Mammary epithelial cell (primary cell): ENCODE measurements at regions of chr12 and their contacts with region 1.

Region 1: DNA sequence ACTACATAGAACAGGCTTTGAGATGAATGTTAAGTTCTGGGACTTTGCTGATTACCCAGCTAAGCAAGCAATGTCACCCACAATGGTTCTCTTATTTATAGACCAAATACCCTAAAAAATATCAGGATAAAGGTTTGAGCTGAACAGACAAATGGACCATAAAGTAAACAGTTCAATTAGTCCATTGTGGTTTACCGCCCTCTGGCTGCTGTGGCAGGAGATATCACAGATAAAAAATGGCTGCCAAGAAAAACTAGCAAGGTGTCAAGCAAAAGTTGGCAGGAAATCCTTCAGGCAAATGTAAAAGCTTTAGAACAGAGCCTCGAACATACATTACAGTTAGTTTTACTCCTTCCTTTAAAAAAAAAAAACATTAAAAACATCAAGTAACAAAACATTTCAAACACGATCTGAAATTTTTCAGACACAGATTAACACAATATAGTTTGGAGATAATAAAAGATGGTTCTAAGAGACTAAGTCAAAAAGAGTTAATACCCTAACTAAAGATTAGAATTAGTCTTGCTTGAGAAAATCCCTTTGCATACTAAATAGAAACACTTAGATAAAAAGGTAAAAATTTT is 41.3 kb downstream of the MED13L start:
- DNase-seq: peak; percentile 40
- H3K4me3 ChIP-seq: no peak overlapping the region
- H3K27ac ChIP-seq: no peak overlapping the region
- H3K4me1 ChIP-seq: peaks cover 6% of the 10 kb centered on the region
- H3K27me3 ChIP-seq: no peaks in the 10 kb centered on the region
- CTCF ChIP-seq: peak; percentile 56 to 82

Region 2: DNA sequence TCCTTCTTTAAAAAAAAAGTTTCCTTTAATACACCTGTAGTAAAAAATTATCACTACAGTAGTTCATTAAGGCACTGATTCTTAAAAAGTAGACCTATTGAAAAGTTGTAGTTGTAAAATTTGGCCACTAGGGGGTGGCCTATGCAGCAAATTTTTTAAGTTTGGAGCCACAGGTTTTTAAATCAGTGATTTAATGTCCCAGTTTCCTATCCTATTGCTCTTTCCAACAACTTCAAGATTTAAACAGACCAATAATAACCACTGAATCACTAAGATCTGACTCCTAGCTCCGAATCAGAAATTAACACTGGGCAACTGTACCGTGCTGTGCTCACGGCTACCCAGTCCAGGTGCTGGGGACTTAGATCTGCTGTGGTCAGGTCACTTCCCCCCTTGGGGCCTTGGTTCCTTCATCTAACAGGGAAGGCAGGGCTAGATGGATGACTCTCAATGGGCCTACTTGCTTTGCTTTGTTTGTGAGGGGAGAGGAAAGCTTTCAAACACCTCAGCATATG is 238.1 kb before region 1 on chr12:
- CTCF ChIA-PET with region 1: no interaction called
- dilution Hi-C with region 1: no loop called
- in situ Hi-C with region 1: no loop called
- intact Hi-C with region 1: loop called (anchors 5 kb)
- DNase-seq: peak; percentile 12
- H3K4me3 ChIP-seq: no peak overlapping the region
- H3K27ac ChIP-seq: no peak overlapping the region
- H3K4me1 ChIP-seq: no peaks in the 10 kb centered on the region
- H3K27me3 ChIP-seq: no peaks in the 10 kb centered on the region
- CTCF ChIP-seq: peak; percentile 60 to 70

Region 3: DNA sequence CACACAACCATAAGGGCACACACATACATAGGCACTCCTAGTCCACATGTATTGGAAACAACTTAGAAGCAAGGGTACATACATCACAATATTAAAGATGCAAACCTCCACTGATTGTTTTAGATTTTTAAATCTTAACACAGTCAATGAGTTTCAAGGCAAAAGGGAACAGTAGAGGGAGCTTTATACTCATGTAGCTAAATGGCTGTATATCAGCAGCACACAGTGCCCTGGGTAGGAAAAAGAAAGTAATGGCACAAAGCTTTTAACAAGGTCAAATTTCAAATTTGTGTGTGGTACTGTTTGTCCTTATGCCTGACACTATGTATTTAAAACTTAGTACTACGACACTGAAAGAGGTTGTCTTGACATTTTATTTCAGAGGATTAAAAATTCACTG is 220.7 kb before region 1 on chr12:
- CTCF ChIA-PET with region 1: interaction called, 4 read pairs
- dilution Hi-C with region 1: no loop called
- in situ Hi-C with region 1: no loop called
- intact Hi-C with region 1: loop called (anchors 1 kb)
- DNase-seq: peak; percentile 31
- H3K4me3 ChIP-seq: no peak overlapping the region
- H3K27ac ChIP-seq: no peak overlapping the region
- H3K4me1 ChIP-seq: no peaks in the 10 kb centered on the region
- H3K27me3 ChIP-seq: no peaks in the 10 kb centered on the region
- CTCF ChIP-seq: peak; percentile 19 to 56

Region 4: DNA sequence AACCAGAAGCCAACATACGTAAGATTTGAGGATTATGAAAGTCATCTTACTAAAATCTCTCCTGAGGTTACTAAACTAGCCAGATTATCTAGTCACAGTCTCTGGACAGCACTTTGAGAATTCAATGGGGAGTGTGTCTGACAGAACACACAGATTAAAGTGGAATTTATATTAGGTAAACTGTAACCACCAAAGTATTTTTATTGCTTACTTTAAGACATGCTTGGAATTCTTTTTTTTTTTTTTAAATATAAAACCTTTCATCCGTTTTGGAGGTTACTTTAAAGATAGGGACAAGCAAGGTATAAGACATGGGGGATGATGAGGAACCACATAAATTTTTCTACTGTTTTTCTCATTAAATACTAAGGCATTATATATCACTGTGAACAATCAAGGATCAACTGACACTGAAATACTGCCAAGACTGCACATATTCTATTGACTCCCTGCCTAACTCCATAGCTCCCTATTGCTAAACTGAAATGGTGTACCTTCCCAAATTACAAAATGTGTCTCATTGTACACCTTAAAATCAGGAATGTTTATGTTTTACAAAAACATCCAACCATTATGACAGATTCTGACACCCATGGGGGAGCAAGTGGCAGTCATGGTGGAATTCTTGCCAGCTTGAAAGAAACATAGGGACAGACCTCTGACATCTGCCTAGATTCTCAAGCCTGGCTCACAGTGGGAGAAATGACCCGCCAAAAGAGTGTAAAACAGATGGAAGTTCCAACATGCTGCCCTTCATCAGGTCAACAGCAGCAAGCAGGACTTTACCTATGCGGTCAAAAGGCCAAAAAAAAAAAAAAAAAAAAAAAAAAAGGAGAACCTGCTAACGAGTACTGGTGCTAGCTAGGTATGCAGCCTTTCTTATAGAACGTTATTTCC is 198.1 kb before region 1 on chr12:
- CTCF ChIA-PET with region 1: no interaction called
- dilution Hi-C with region 1: no loop called
- in situ Hi-C with region 1: loop called in 1 of 2 experiments (anchors 25 kb)
- intact Hi-C with region 1: no loop called
- DNase-seq: no peak
- H3K4me3 ChIP-seq: no peak overlapping the region
- H3K27ac ChIP-seq: no peak overlapping the region
- H3K4me1 ChIP-seq: no peaks in the 10 kb centered on the region
- H3K27me3 ChIP-seq: no peaks in the 10 kb centered on the region
- CTCF ChIP-seq: no peak

Region 5: GRCh38 chr12:116066381-116067230 is 169.6 kb before region 1 on chr12:
- CTCF ChIA-PET with region 1: no interaction called
- dilution Hi-C with region 1: no loop called
- in situ Hi-C with region 1: no loop called
- intact Hi-C with region 1: loop called (anchors 1 kb)
- DNase-seq: no peak
- H3K4me3 ChIP-seq: no peak overlapping the region
- H3K27ac ChIP-seq: no peak overlapping the region
- H3K4me1 ChIP-seq: no peaks in the 10 kb centered on the region
- H3K27me3 ChIP-seq: no peaks in the 10 kb centered on the region
- CTCF ChIP-seq: peak; percentile 77 to 83

Region 6: GRCh38 chr12:116142936-116143898 is 93.0 kb before region 1 on chr12:
- CTCF ChIA-PET with region 1: interaction called, 7 read pairs
- dilution Hi-C with region 1: no loop called
- in situ Hi-C with region 1: no loop called
- intact Hi-C with region 1: loop called (anchors 1 kb)
- DNase-seq: peak; percentile 75
- H3K4me3 ChIP-seq: no peak overlapping the region
- H3K27ac ChIP-seq: peak overlapping the region; percentile 33
- H3K4me1 ChIP-seq: peaks cover 26% of the 10 kb centered on the region
- H3K27me3 ChIP-seq: no peaks in the 10 kb centered on the region
- CTCF ChIP-seq: no peak